ENCODE measurements at regions of chr4 and their contacts with region 1.

Region 1: DNA sequence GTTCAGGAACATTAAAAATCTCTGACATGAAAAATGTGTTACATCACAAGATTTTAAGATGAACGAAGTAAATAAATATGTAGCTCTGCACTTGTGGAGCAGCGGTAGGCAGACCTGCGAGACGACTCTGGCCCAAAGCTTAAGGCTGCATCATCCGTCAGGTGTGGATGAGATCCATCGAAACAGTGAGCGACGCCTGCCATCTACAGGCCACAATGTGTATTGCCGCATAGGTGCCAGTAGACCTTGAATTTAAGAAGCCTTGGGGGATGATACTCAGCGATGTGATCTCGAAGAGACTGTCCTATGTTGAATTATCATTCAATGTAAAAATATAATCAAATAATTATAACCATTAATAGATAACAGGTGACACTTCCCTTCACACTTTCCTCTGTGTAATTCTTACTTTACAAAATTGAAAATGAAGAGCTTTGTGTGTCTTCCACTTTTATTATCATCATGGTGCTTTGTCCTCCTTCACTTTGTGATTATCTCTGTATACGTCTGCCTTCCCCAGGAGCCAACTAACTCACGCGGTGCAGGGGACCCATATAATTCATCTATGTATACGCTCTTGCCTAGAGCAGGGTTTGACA is 851.0 kb downstream of the RAB28 start:
- DNase-seq: peak; percentile 69 to 73
- ATAC-seq: peak; percentile 46 to 93 (median 82)
- H3K4me3 ChIP-seq: no peak overlapping the region
- H3K27ac ChIP-seq: no peak overlapping the region
- H3K4me1 ChIP-seq: no peaks in the 10 kb centered on the region
- H3K27me3 ChIP-seq: no peaks in the 10 kb centered on the region
- CTCF ChIP-seq: peak; percentile 66 to 93 (median 88)

Region 2: DNA sequence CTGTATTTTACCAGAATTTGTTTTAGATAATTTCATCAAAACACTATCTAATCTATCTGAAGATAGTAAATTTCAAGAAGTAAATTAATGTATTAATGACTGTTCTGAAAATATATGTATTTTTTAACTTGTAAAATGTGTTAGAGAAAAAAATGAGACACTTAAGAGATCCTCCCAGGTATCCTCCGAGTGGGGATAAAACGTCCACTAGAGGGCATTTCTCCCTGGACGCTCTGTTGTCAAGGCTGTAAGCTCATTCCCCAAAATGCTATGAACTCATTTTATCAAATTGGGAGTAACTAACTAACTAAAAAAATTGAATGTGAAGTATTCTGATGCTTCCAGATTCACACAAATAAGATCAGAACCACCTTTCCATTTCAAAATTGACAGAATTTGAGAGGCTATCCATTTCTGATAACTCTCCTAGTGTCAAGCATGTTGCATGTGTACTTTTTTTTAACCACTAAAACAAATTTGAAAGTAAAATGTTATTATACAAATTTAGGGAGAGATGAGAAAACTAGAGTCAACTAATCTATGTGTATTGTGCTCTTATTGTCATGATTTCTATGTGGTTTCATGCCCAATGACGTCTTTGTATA is 867.2 kb before region 1 on chr4:
- intact Hi-C with region 1: loop called in 3 of 10 experiments (anchors 5 to 10 kb)
- DNase-seq: peak in 1 of 2 donors; percentile 11
- ATAC-seq: no peak
- H3K4me3 ChIP-seq: no peak overlapping the region
- H3K27ac ChIP-seq: no peak overlapping the region
- H3K4me1 ChIP-seq: no peaks in the 10 kb centered on the region
- H3K27me3 ChIP-seq: no peaks in the 10 kb centered on the region
- CTCF ChIP-seq: peak; percentile 18 to 82 (median 75)

Region 3: DNA sequence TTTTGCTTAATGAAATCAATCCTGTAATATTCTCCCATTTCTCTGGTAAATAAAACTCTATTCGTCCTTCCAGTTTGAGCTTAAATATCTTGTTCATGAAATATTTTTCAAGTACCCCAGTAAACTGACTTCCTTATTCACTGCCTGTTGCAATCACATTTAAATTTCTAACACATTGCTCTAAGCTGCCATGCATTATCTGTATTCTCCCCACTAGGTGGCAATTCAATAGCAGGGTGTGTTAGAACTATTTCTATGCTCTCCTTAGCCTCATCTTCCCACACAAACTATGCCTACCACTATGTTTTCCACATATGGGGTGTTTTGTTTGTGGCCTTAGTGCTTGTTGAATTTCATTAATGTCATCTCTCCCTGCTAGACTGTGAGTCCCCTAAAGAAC is 827.3 kb before region 1 on chr4:
- intact Hi-C with region 1: loop called in 4 of 10 experiments (anchors 10 kb)
- DNase-seq: no peak
- ATAC-seq: peak in 7 of 8 donors; percentile 55 to 86 (median 74)
- H3K4me3 ChIP-seq: no peak overlapping the region
- H3K27ac ChIP-seq: no peak overlapping the region
- H3K4me1 ChIP-seq: no peaks in the 10 kb centered on the region
- H3K27me3 ChIP-seq: no peaks in the 10 kb centered on the region
- CTCF ChIP-seq: peak; percentile 46 to 71 (median 59)

Region 4: GRCh38 chr4:12178614-12179610 is 454.2 kb before region 1 on chr4:
- intact Hi-C with region 1: loop called in 1 of 10 experiments (anchors 2 kb)
- DNase-seq: peak in 1 of 2 donors; percentile 21
- ATAC-seq: peak in 6 of 8 donors; percentile 34 to 83 (median 62)
- H3K4me3 ChIP-seq: no peak overlapping the region
- H3K27ac ChIP-seq: peak overlapping the region in 1 of 10 donors; percentile 15
- H3K4me1 ChIP-seq: no peaks in the 10 kb centered on the region
- H3K27me3 ChIP-seq: no peaks in the 10 kb centered on the region
- CTCF ChIP-seq: peak in 1 of 9 donors; percentile 16

Region 5: DNA sequence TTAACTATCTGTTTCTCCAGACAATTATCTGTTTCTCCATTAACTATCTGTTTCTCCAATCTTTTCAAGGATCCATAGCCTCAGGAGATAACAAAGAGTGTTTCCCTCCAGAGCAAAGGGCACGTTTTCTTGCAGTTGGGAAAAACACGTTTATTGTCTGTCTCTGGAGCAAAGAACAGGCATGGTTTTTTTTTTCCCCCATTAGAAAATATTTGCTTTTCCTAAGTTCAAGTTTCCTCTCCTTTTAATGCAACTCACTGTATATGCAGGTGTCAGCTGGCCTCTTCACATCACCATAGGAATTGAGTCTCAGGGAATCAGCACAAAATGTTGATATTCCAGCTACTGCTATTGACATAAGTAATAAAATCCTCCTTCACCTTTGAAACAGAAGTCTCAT is 133.5 kb before region 1 on chr4:
- intact Hi-C with region 1: loop called in 1 of 10 experiments (anchors 10 kb)
- DNase-seq: no peak
- ATAC-seq: no peak
- H3K4me3 ChIP-seq: no peak overlapping the region
- H3K27ac ChIP-seq: no peak overlapping the region
- H3K4me1 ChIP-seq: peaks cover 0 to 14% (median 0%) of the 10 kb centered on the region in 9 donors
- H3K27me3 ChIP-seq: no peaks in the 10 kb centered on the region
- CTCF ChIP-seq: no peak

Region 6: GRCh38 chr4:12538162-12538561 is 95.0 kb before region 1 on chr4:
- intact Hi-C with region 1: no loop called
- DNase-seq: peak in 1 of 2 donors; percentile 5
- ATAC-seq: no peak
- H3K4me3 ChIP-seq: no peak overlapping the region
- H3K27ac ChIP-seq: no peak overlapping the region
- H3K4me1 ChIP-seq: no peaks in the 10 kb centered on the region
- H3K27me3 ChIP-seq: no peaks in the 10 kb centered on the region
- CTCF ChIP-seq: no peak

Measured in heart right ventricle (tissue), 16 donors.